Natural killer cell (primary cell): ENCODE measurements at regions of chr6 and their contacts with region 1.

Region 1: GRCh38 chr6:137261393-137262160 is 42.4 kb upstream of the IFNGR1 start:
- DNase-seq: peak in 1 of 2 donors; percentile 41
- ATAC-seq: peak in 2 of 3 donors; percentile 49 to 51
- H3K4me3 ChIP-seq: no peak overlapping the region
- H3K4me3 Mint-ChIP-seq: peak overlapping the region; percentile 74
- H3K27ac ChIP-seq: peak overlapping the region; percentile 59
- H3K27ac Mint-ChIP-seq: peak overlapping the region; percentile 77 to 92
- H3K4me1 ChIP-seq: peaks cover 33% of the 10 kb centered on the region
- H3K4me1 Mint-ChIP-seq: peaks cover 66 to 68% of the 10 kb centered on the region in 2 donors
- H3K27me3 ChIP-seq: no peaks in the 10 kb centered on the region
- H3K27me3 Mint-ChIP-seq: no peaks in the 10 kb centered on the region
- CTCF ChIP-seq: no peak

Region 2: GRCh38 chr6:136526196-136526930 is 735.2 kb before region 1 on chr6:
- intact Hi-C with region 1: no loop called
- DNase-seq: peak in 1 of 2 donors; percentile 58
- ATAC-seq: peak; percentile 53 to 78 (median 64)
- H3K4me3 ChIP-seq: no peak overlapping the region
- H3K4me3 Mint-ChIP-seq: no peak overlapping the region
- H3K27ac ChIP-seq: no peak overlapping the region
- H3K27ac Mint-ChIP-seq: no peak overlapping the region
- H3K4me1 ChIP-seq: no peaks in the 10 kb centered on the region
- H3K4me1 Mint-ChIP-seq: peaks cover 6 to 9% of the 10 kb centered on the region in 2 donors
- H3K27me3 ChIP-seq: no peaks in the 10 kb centered on the region
- H3K27me3 Mint-ChIP-seq: peaks cover 9 to 26% of the 10 kb centered on the region in 2 donors
- CTCF ChIP-seq: no peak

Region 3: GRCh38 chr6:137094411-137095008 is 167.1 kb before region 1 on chr6:
- intact Hi-C with region 1: loop called (anchors 5 kb)
- DNase-seq: peak; percentile 30 to 81
- ATAC-seq: peak; percentile 73 to 85 (median 84)
- H3K4me3 ChIP-seq: peak overlapping the region; percentile 4
- H3K4me3 Mint-ChIP-seq: peak overlapping the region; percentile 68
- H3K27ac ChIP-seq: peak overlapping the region; percentile 23
- H3K27ac Mint-ChIP-seq: peak overlapping the region; percentile 36 to 45
- H3K4me1 ChIP-seq: peaks cover 12% of the 10 kb centered on the region
- H3K4me1 Mint-ChIP-seq: peaks cover 20 to 24% of the 10 kb centered on the region in 2 donors
- H3K27me3 ChIP-seq: no peaks in the 10 kb centered on the region
- H3K27me3 Mint-ChIP-seq: peaks cover 6 to 7% of the 10 kb centered on the region in 2 donors
- CTCF ChIP-seq: peak; percentile 80

Region 4: DNA sequence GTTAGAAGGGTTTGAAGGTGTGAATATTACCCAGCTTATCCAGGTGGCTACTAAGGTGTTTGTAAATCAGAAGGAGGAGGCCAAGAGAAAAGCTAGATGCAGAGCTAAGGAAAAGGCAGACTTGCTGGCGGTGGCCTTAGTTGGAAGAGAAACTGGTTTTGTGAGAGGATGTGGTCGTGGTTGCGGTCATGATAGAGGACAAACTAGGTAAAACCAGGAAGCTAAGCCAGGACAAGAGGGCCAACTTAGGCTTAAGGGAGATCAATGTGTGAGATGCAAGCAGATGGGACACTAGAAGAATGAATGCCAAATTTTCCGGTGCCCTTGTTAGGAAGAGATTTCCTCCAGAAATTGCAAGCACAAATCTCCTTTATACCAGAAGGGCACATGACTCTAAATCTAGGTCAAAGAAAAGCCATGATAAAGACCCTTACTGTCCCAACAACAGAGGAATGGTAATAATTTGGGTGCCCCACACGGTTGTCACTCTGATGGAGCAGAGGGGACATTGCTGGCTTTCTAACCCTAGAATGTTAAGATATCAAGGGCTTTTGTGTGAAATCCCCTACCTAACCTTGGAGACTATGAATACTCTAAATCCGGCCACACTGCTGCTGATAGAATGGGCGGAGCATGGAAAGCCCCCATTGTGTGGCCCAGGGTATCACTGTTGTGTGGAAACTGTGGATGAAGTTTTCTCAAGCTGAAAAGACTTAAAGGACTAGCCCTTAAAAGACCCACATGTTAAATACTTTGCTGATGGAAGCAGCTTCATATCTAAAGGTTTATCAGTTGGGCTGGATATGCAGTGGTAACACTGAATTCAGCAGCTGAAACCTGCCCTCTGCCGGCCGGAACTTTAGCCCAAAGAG is 96.0 kb before region 1 on chr6:
- intact Hi-C with region 1: no loop called
- DNase-seq: peak; percentile 38 to 58
- ATAC-seq: peak; percentile 70 to 82 (median 72)
- H3K4me3 ChIP-seq: no peak overlapping the region
- H3K4me3 Mint-ChIP-seq: peak overlapping the region; percentile 77
- H3K27ac ChIP-seq: peak overlapping the region; percentile 5
- H3K27ac Mint-ChIP-seq: peak overlapping the region; percentile 39 to 53
- H3K4me1 ChIP-seq: peaks cover 27% of the 10 kb centered on the region
- H3K4me1 Mint-ChIP-seq: peaks cover 44 to 47% of the 10 kb centered on the region in 2 donors
- H3K27me3 ChIP-seq: no peaks in the 10 kb centered on the region
- H3K27me3 Mint-ChIP-seq: peaks cover 22 to 31% of the 10 kb centered on the region in 2 donors
- CTCF ChIP-seq: no peak

Region 5: DNA sequence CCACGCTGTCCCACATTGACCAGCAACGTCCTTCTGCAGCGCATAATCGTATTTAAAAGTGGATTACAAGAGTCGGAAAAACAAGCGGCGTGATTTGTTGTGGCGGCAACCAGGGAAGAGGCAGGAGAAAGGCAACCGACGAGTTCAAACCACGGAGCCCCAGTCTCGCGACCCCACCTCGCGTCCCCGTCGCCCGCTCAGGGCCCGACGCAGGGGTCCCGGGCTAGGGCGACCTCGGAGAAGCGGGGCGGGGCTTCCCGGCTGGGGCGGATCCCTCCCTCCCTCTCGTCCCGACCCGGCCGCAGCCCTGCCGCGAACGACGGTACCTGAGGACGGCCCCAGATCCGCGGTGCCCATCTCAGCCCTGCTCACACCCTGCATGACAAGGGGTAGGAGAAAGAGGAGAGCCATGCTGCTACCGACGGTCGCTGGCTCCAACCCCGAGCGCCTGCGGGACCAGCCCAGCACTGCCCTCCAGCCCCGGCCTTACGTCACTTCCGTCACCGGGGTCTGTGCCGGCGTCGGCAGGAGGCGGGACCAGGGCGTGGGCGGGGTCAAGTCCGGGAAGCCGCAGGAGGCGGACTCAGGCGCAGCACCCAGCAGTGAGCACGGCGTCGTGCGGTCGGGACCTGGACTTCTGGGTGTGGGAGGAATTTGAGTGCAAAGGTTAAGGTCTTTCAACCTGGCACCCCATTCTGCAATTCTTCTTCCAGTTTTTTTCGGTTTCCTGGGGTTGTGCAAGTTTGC is 42.5 kb before region 1 on chr6 and contains the start of gene IFNGR1:
- intact Hi-C with region 1: loop called (anchors 1 kb)
- DNase-seq: peak; percentile 96 to 97
- ATAC-seq: peak; percentile 82 to 93 (median 91)
- H3K4me3 ChIP-seq: peak within 1 kb of the TSS; percentile 78
- H3K4me3 Mint-ChIP-seq: peak within 1 kb of the TSS; percentile 100
- H3K27ac ChIP-seq: peak within 1 kb of the TSS; percentile 93
- H3K27ac Mint-ChIP-seq: peak within 1 kb of the TSS; percentile 99
- H3K4me1 ChIP-seq: peaks cover 45% of the 10 kb centered on the region
- H3K4me1 Mint-ChIP-seq: peaks cover 64 to 65% of the 10 kb centered on the region in 2 donors
- H3K27me3 ChIP-seq: no peaks in the 10 kb centered on the region
- H3K27me3 Mint-ChIP-seq: no peaks in the 10 kb centered on the region
- CTCF ChIP-seq: no peak
- total RNA-seq, gene IFNGR1: 77.5 to 128 (median 100) TPM

Region 6: GRCh38 chr6:137717074-137718073 is 455.8 kb after region 1 on chr6:
- intact Hi-C with region 1: loop called (anchors 10 kb)
- DNase-seq: peak; percentile 60 to 94
- ATAC-seq: peak; percentile 48 to 58 (median 52)
- H3K4me3 ChIP-seq: no peak overlapping the region
- H3K4me3 Mint-ChIP-seq: peak overlapping the region; percentile 74
- H3K27ac ChIP-seq: peak overlapping the region; percentile 81
- H3K27ac Mint-ChIP-seq: peak overlapping the region; percentile 87 to 97
- H3K4me1 ChIP-seq: peaks cover 21% of the 10 kb centered on the region
- H3K4me1 Mint-ChIP-seq: peaks cover 55 to 59% of the 10 kb centered on the region in 2 donors
- H3K27me3 ChIP-seq: no peaks in the 10 kb centered on the region
- H3K27me3 Mint-ChIP-seq: peaks cover 4 to 15% of the 10 kb centered on the region in 2 donors
- CTCF ChIP-seq: no peak

Region 7: GRCh38 chr6:137975188-137975940 is 713.8 kb after region 1 on chr6:
- intact Hi-C with region 1: loop called (anchors 10 kb)
- DNase-seq: peak in 1 of 2 donors; percentile 82
- ATAC-seq: peak; percentile 84 to 90 (median 87)
- H3K4me3 ChIP-seq: peak overlapping the region; percentile 15
- H3K4me3 Mint-ChIP-seq: peak overlapping the region; percentile 90
- H3K27ac ChIP-seq: peak overlapping the region; percentile 93
- H3K27ac Mint-ChIP-seq: peak overlapping the region; percentile 87 to 97
- H3K4me1 ChIP-seq: peaks cover 66% of the 10 kb centered on the region
- H3K4me1 Mint-ChIP-seq: peaks cover 64 to 74% of the 10 kb centered on the region in 2 donors
- H3K27me3 ChIP-seq: no peaks in the 10 kb centered on the region
- H3K27me3 Mint-ChIP-seq: no peaks in the 10 kb centered on the region
- CTCF ChIP-seq: peak; percentile 60